ENCODE measurements at regions of chr20 and their contacts with region 1.

Region 1: DNA sequence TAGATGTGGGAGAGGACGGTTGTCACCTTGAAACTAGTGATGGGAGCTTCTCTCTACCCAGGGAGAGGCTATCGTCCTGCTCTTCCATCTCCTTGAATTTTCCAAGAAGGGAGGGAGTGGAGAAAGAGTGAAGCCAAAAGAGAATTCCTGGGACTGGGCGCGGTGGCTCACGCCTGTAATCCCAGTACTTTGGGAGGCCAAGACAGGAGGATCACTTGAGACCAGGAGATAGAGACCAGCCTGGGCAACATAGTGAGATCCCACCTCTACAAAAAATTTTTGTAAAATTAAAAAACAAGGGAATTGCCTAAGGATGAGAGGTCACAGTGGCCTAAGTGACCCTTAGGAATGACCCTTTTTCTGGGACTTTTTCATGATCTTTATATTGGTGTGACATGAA is 8.8 kb downstream of the MYH7B start:
- H3K4me3 Mint-ChIP-seq: no peak overlapping the region
- H3K27ac Mint-ChIP-seq: no peak overlapping the region
- H3K4me1 Mint-ChIP-seq: peaks cover 7% of the 10 kb centered on the region
- H3K27me3 Mint-ChIP-seq: no peaks in the 10 kb centered on the region

Region 2: DNA sequence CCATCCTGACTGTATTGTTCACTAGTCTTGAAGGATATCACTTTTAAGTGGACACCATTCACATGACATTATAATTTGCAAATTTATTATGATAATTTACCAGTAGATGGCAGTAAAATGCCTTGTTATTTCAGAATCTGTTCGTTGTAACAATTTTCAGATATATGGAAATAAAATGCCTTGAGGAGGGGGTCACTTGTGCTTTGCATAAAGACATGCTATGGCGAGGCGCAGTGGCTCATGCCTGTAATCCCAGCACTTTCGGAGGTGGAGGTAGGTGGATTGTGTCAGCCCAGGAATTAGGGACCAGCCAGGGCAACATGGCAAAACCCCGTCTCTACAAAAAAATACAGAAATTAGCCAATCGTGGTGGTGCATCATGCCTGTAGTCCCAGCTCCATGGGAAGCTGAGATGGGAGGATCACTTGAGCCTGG is 130.0 kb before region 1 on chr20:
- intact Hi-C with region 1: loop called (anchors 5 kb)
- H3K4me3 Mint-ChIP-seq: no peak overlapping the region
- H3K27ac Mint-ChIP-seq: no peak overlapping the region
- H3K4me1 Mint-ChIP-seq: peaks cover 12% of the 10 kb centered on the region
- H3K27me3 Mint-ChIP-seq: no peaks in the 10 kb centered on the region

Region 3: GRCh38 chr20:34997131-34997561 is 32.7 kb after region 1 on chr20:
- intact Hi-C with region 1: no loop called
- H3K4me3 Mint-ChIP-seq: no peak overlapping the region
- H3K27ac Mint-ChIP-seq: no peak overlapping the region
- H3K4me1 Mint-ChIP-seq: no peaks in the 10 kb centered on the region
- H3K27me3 Mint-ChIP-seq: no peaks in the 10 kb centered on the region